ENCODE measurements at regions of chr17 and their contacts with region 1.

Region 1: DNA sequence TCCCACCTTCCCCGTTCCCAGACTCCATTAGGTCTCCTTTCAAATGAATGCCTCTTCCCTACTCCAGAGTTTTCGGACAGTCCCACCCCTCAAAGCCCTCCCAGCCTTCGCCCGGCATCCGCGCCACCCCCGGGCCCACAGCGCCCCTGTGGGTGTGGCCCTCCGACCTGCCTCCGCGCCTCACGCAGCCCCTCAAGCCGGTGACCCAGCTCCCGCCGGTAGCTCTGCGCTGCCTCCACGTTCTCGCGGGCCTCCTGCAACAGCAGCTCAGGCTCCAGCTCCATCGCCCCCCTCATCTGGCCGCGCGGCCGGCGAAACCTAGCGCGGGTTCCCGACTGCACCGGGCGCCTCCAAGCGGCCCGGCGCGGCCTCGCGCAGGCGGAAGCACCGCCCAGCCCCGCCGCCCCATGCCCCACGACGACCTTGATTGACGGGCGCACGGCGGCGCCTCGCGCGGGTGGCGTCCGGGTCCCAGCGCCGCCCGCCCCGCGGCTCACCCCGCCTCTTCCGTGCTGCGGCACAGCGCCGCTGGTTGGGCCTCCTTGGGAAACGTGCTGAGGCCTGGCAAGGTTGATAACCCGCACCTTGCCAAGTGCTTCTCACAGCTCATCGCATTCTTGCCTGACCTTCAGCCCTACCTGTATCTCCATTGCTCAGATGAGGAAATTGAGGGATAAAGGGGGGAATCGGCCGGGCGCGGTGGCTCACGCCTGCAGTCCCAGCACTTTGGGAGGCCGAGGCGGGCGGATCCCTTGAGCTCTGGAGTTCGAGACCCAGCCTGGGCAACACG is at the start of gene CRLF3:
- DNase-seq: peak; percentile 82 to 97 (median 90)
- ATAC-seq: peak; percentile 90
- H3K4me3 ChIP-seq: peak within 1 kb of the TSS; percentile 87
- H3K4me3 Mint-ChIP-seq: peak within 1 kb of the TSS; percentile 94
- H3K27ac ChIP-seq: peak within 1 kb of the TSS; percentile 72 to 73
- H3K27ac Mint-ChIP-seq: peak within 1 kb of the TSS; percentile 83
- H3K4me1 ChIP-seq: peaks cover 32% of the 10 kb centered on the region
- H3K4me1 Mint-ChIP-seq: peaks cover 44% of the 10 kb centered on the region
- H3K27me3 ChIP-seq: no peaks in the 10 kb centered on the region
- H3K27me3 Mint-ChIP-seq: no peaks in the 10 kb centered on the region
- CTCF ChIP-seq: peak; percentile 53
- total RNA-seq, gene CRLF3: 60.9 to 62.9 TPM

Region 2: GRCh38 chr17:30124273-30124796 is 700.2 kb before region 1 on chr17:
- CTCF ChIA-PET with region 1: no interaction called
- POLR2A ChIA-PET with region 1: no interaction called
- intact Hi-C with region 1: loop called (anchors 10 kb)
- DNase-seq: no peak
- ATAC-seq: no peak
- H3K4me3 ChIP-seq: no peak overlapping the region
- H3K4me3 Mint-ChIP-seq: no peak overlapping the region
- H3K27ac ChIP-seq: no peak overlapping the region
- H3K27ac Mint-ChIP-seq: peak overlapping the region; percentile 27
- H3K4me1 ChIP-seq: peaks cover 10% of the 10 kb centered on the region
- H3K4me1 Mint-ChIP-seq: peaks cover 42% of the 10 kb centered on the region
- H3K27me3 ChIP-seq: no peaks in the 10 kb centered on the region
- H3K27me3 Mint-ChIP-seq: no peaks in the 10 kb centered on the region
- CTCF ChIP-seq: no peak

Region 3: GRCh38 chr17:30477083-30477773 is 347.3 kb before region 1 on chr17 and contains the start of gene GOSR1:
- CTCF ChIA-PET with region 1: no interaction called
- POLR2A ChIA-PET with region 1: no interaction called
- intact Hi-C with region 1: loop called (anchors 2 kb)
- DNase-seq: peak; percentile 84 to 97 (median 90)
- ATAC-seq: peak; percentile 97
- H3K4me3 ChIP-seq: peak within 1 kb of the TSS; percentile 56
- H3K4me3 Mint-ChIP-seq: peak within 1 kb of the TSS; percentile 97
- H3K27ac ChIP-seq: peak within 1 kb of the TSS; percentile 71 to 99
- H3K27ac Mint-ChIP-seq: peak within 1 kb of the TSS; percentile 94
- H3K4me1 ChIP-seq: peaks cover 13% of the 10 kb centered on the region
- H3K4me1 Mint-ChIP-seq: peaks cover 48% of the 10 kb centered on the region
- H3K27me3 ChIP-seq: peaks cover 0 to 5% of the 10 kb centered on the region in 2 experiments
- H3K27me3 Mint-ChIP-seq: no peaks in the 10 kb centered on the region
- CTCF ChIP-seq: peak; percentile 73
- total RNA-seq, gene GOSR1: 43.2 to 45.6 TPM

Region 4: DNA sequence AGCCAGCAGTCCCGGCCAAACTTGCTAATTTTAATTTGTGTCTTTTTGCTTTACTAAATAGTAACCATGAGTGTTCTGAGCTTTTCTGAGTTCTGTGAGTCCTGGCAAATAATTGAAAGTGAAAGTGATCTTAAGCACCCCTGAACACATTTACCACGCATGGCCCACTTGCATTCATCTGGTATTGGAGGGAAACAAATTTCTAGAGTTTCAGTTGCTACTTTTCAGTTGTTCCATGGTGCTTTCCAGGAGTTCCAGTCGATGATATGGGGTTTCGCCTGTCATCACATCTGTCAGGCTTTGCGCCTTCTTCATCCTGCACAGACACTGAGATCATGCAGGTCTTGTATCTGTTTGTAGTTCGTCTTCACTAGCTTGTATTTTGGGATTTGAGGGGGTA is 44.2 kb before region 1 on chr17:
- CTCF ChIA-PET with region 1: interaction called, 12 read pairs
- POLR2A ChIA-PET with region 1: interaction called, 6 read pairs
- intact Hi-C with region 1: no loop called
- DNase-seq: peak in 1 of 14 experiments; percentile 14
- ATAC-seq: no peak
- H3K4me3 ChIP-seq: no peak overlapping the region
- H3K4me3 Mint-ChIP-seq: no peak overlapping the region
- H3K27ac ChIP-seq: peak overlapping the region in 1 of 2 donors; percentile 15
- H3K27ac Mint-ChIP-seq: peak overlapping the region; percentile 18
- H3K4me1 ChIP-seq: peaks cover 2% of the 10 kb centered on the region
- H3K4me1 Mint-ChIP-seq: peaks cover 10% of the 10 kb centered on the region
- H3K27me3 ChIP-seq: no peaks in the 10 kb centered on the region
- H3K27me3 Mint-ChIP-seq: no peaks in the 10 kb centered on the region
- CTCF ChIP-seq: no peak

Region 5: GRCh38 chr17:30808785-30809286 is 15.7 kb before region 1 on chr17:
- CTCF ChIA-PET with region 1: interaction called, 160 read pairs
- POLR2A ChIA-PET with region 1: interaction called, 289 read pairs
- intact Hi-C with region 1: loop called (anchors 1 kb)
- DNase-seq: peak in 7 of 14 experiments; percentile 24 to 88 (median 54)
- ATAC-seq: peak; percentile 90
- H3K4me3 ChIP-seq: peak overlapping the region; percentile 38
- H3K4me3 Mint-ChIP-seq: peak overlapping the region; percentile 89
- H3K27ac ChIP-seq: peak overlapping the region; percentile 70 to 81
- H3K27ac Mint-ChIP-seq: peak overlapping the region; percentile 99
- H3K4me1 ChIP-seq: peaks cover 62% of the 10 kb centered on the region
- H3K4me1 Mint-ChIP-seq: peaks cover 77% of the 10 kb centered on the region
- H3K27me3 ChIP-seq: no peaks in the 10 kb centered on the region
- H3K27me3 Mint-ChIP-seq: no peaks in the 10 kb centered on the region
- CTCF ChIP-seq: no peak